CD4-positive, alpha-beta memory T cell (primary cell): ENCODE measurements at regions of chr16 and their contacts with region 1.

Region 1: GRCh38 chr16:84116720-84117493 is at the start of gene MBTPS1:
- DNase-seq: peak; percentile 96 to 98 (median 98)
- H3K4me3 ChIP-seq: peak within 1 kb of the TSS; percentile 55 to 96
- H3K4me3 Mint-ChIP-seq: peak within 1 kb of the TSS; percentile 90 to 96 (median 92)
- H3K27ac ChIP-seq: peak within 1 kb of the TSS; percentile 91
- H3K27ac Mint-ChIP-seq: peak within 1 kb of the TSS; percentile 93 to 99 (median 96)
- H3K4me1 ChIP-seq: peaks cover 34% of the 10 kb centered on the region
- H3K4me1 Mint-ChIP-seq: peaks cover 11 to 34% (median 21%) of the 10 kb centered on the region in 4 donors
- H3K27me3 ChIP-seq: no peaks in the 10 kb centered on the region
- H3K27me3 Mint-ChIP-seq: no peaks in the 10 kb centered on the region
- total RNA-seq, gene MBTPS1: 137 to 140 TPM

Region 2: GRCh38 chr16:83807710-83808572 is 309.0 kb before region 1 on chr16 and contains the start of gene HSBP1:
- CTCF ChIA-PET with region 1: no interaction called
- POLR2A ChIA-PET with region 1: interaction called, 5 read pairs
- intact Hi-C with region 1: loop called (anchors 1 kb)
- DNase-seq: peak; percentile 91 to 92 (median 91)
- H3K4me3 ChIP-seq: peak within 1 kb of the TSS; percentile 76 to 89
- H3K4me3 Mint-ChIP-seq: peak within 1 kb of the TSS; percentile 97 to 99 (median 98)
- H3K27ac ChIP-seq: peak within 1 kb of the TSS; percentile 74
- H3K27ac Mint-ChIP-seq: peak within 1 kb of the TSS; percentile 86 to 98 (median 97)
- H3K4me1 ChIP-seq: peaks cover 35% of the 10 kb centered on the region
- H3K4me1 Mint-ChIP-seq: peaks cover 20 to 57% (median 33%) of the 10 kb centered on the region in 4 donors
- H3K27me3 ChIP-seq: no peaks in the 10 kb centered on the region
- H3K27me3 Mint-ChIP-seq: no peaks in the 10 kb centered on the region
- total RNA-seq, gene HSBP1: 30.7 to 34.3 TPM

Region 3: GRCh38 chr16:83956336-83957289 is 160.3 kb before region 1 on chr16:
- CTCF ChIA-PET with region 1: no interaction called
- POLR2A ChIA-PET with region 1: no interaction called
- intact Hi-C with region 1: no loop called
- DNase-seq: peak; percentile 46 to 61 (median 57)
- H3K4me3 ChIP-seq: no peak overlapping the region
- H3K4me3 Mint-ChIP-seq: no peak overlapping the region
- H3K27ac ChIP-seq: no peak overlapping the region
- H3K27ac Mint-ChIP-seq: no peak overlapping the region
- H3K4me1 ChIP-seq: peaks cover 10% of the 10 kb centered on the region
- H3K4me1 Mint-ChIP-seq: peaks cover 0 to 8% (median 4%) of the 10 kb centered on the region in 4 donors
- H3K27me3 ChIP-seq: no peaks in the 10 kb centered on the region
- H3K27me3 Mint-ChIP-seq: peaks cover 10 to 15% of the 10 kb centered on the region in 2 donors

Region 4: GRCh38 chr16:84103678-84104077 is 13.2 kb before region 1 on chr16:
- CTCF ChIA-PET with region 1: interaction called, 4 read pairs
- POLR2A ChIA-PET with region 1: interaction called, 20 read pairs
- intact Hi-C with region 1: no loop called
- DNase-seq: no peak
- H3K4me3 ChIP-seq: no peak overlapping the region
- H3K4me3 Mint-ChIP-seq: no peak overlapping the region
- H3K27ac ChIP-seq: no peak overlapping the region
- H3K27ac Mint-ChIP-seq: peak overlapping the region in 4 of 7 donors; percentile 1 to 38 (median 20)
- H3K4me1 ChIP-seq: peaks cover 26% of the 10 kb centered on the region
- H3K4me1 Mint-ChIP-seq: peaks cover 32 to 65% (median 49%) of the 10 kb centered on the region in 4 donors
- H3K27me3 ChIP-seq: no peaks in the 10 kb centered on the region
- H3K27me3 Mint-ChIP-seq: no peaks in the 10 kb centered on the region

Region 5: GRCh38 chr16:84175350-84176081 is 58.6 kb after region 1 on chr16:
- CTCF ChIA-PET with region 1: interaction called, 4 read pairs
- POLR2A ChIA-PET with region 1: interaction called, 5 read pairs
- intact Hi-C with region 1: loop called (anchors 2 kb)
- DNase-seq: peak; percentile 35 to 59 (median 45)
- H3K4me3 ChIP-seq: no peak overlapping the region
- H3K4me3 Mint-ChIP-seq: no peak overlapping the region
- H3K27ac ChIP-seq: no peak overlapping the region
- H3K27ac Mint-ChIP-seq: peak overlapping the region in 2 of 7 donors; percentile 9 to 59
- H3K4me1 ChIP-seq: no peaks in the 10 kb centered on the region
- H3K4me1 Mint-ChIP-seq: peaks cover 0 to 6% (median 5%) of the 10 kb centered on the region in 4 donors
- H3K27me3 ChIP-seq: no peaks in the 10 kb centered on the region
- H3K27me3 Mint-ChIP-seq: peaks cover 0 to 2% of the 10 kb centered on the region in 2 donors

Region 6: GRCh38 chr16:85688586-85689284 is 1571.8 kb after region 1 on chr16 and contains the start of gene GINS2:
- CTCF ChIA-PET with region 1: no interaction called
- POLR2A ChIA-PET with region 1: no interaction called
- intact Hi-C with region 1: loop called (anchors 10 kb)
- DNase-seq: peak; percentile 88 to 91 (median 90)
- H3K4me3 ChIP-seq: peak within 1 kb of the TSS; percentile 23 to 75
- H3K4me3 Mint-ChIP-seq: peak within 1 kb of the TSS; percentile 71 to 85 (median 82)
- H3K27ac ChIP-seq: peak within 1 kb of the TSS; percentile 34
- H3K27ac Mint-ChIP-seq: peak within 1 kb of the TSS in 4 of 7 donors; percentile 53 to 76 (median 68)
- H3K4me1 ChIP-seq: peaks cover 23% of the 10 kb centered on the region
- H3K4me1 Mint-ChIP-seq: peaks cover 0 to 14% (median 8%) of the 10 kb centered on the region in 4 donors
- H3K27me3 ChIP-seq: no peaks in the 10 kb centered on the region
- H3K27me3 Mint-ChIP-seq: peaks cover 0 to 2% of the 10 kb centered on the region in 2 donors
- total RNA-seq, gene GINS2: 1.2 to 1.4 TPM